Endothelial cell of umbilical vein (primary cell): ENCODE measurements at regions of chr4 and their contacts with region 1.

Region 1: GRCh38 chr4:176319704-176320339 is at the start of gene SPCS3:
- DNase-seq: peak; percentile 95
- H3K4me3 ChIP-seq: peak within 1 kb of the TSS; percentile 51 to 85 (median 74)
- H3K27ac ChIP-seq: peak within 1 kb of the TSS; percentile 99
- H3K4me1 ChIP-seq: peaks cover 20% of the 10 kb centered on the region
- H3K27me3 ChIP-seq: no peaks in the 10 kb centered on the region
- CTCF ChIP-seq: no peak
- POLR2A ChIP-seq: peak; percentile 95
- total RNA-seq, gene SPCS3: 179 and 183 TPM in 2 replicates

Region 2: DNA sequence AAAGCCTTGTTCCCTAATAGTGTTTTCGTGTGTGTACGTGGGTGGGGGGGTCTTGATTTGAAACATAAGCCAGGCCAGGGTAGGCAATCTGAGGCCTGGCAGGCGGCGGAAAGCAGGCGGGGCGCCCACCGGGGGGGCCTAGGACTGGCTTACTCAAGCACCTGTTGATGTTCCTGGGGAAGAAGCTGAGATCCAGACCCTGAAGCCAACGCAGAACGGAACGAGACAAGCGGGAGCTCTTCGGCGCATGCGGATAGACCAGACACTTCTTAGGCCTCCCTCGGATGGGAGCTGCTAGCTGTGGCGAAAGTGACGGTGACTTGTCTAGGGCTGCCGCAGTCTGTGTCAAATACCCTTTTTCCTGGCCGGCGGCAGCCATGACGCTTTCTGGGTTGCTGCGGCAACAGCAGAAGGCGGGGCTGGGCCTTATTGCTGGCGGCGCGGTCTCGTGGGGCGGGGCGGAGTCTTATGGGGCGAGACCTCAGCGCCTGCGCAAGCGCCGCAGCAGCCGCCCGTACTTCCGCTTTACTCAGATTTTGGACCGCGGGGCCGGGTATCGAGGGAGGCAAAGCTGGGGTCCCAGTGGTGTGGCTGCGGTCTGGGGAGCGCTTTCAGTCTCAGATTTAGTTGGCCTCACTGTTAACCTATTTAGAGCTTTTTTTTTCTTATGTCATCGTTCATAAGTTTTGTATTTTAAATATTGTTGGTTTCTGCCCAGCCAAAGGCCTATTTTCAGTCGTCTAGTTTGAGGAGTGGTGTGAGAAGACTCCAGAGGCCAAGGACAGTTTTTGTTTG is 124.4 kb before region 1 on chr4 and contains the start of gene SPATA4:
- CTCF ChIA-PET with region 1: no interaction called
- POLR2A ChIA-PET with region 1: no interaction called
- dilution Hi-C with region 1: no loop called
- intact Hi-C with region 1: loop called (anchors 1 kb)
- DNase-seq: peak; percentile 93
- H3K4me3 ChIP-seq: peak within 1 kb of the TSS; percentile 30 to 67 (median 59)
- H3K27ac ChIP-seq: peak within 1 kb of the TSS; percentile 52
- H3K4me1 ChIP-seq: peaks cover 19% of the 10 kb centered on the region
- H3K27me3 ChIP-seq: no peaks in the 10 kb centered on the region
- CTCF ChIP-seq: no peak
- POLR2A ChIP-seq: peak; percentile 75
- total RNA-seq, gene SPATA4: not detected in 2 replicates

Region 3: DNA sequence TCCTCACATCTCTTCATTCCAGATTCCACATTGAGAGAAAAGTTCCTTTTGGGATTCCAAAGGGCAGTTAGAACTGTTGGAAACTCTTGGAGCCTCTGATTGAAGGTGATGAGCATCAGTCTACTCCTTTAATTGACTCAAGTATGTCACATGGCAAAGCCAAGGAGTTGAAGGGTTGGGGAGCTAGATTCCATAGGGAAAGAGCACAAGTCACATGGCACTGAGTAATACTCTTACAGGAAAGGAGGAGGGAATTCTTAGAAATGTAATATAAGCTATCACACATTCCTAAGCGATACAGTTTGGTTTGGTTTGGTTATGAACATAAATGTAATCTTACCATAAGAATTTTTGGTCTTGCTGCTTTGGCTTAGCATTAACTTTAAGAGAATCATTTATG is 15.6 kb after region 1 on chr4:
- CTCF ChIA-PET with region 1: interaction called, 12 read pairs
- POLR2A ChIA-PET with region 1: no interaction called
- dilution Hi-C with region 1: no loop called
- intact Hi-C with region 1: loop called (anchors 2 kb)
- DNase-seq: no peak
- H3K4me3 ChIP-seq: no peak overlapping the region
- H3K27ac ChIP-seq: no peak overlapping the region
- H3K4me1 ChIP-seq: no peaks in the 10 kb centered on the region
- H3K27me3 ChIP-seq: no peaks in the 10 kb centered on the region
- CTCF ChIP-seq: no peak
- POLR2A ChIP-seq: no peak